RWPE1 (cell line): ENCODE measurements at regions of chr9 and their contacts with region 1.

Region 1: DNA sequence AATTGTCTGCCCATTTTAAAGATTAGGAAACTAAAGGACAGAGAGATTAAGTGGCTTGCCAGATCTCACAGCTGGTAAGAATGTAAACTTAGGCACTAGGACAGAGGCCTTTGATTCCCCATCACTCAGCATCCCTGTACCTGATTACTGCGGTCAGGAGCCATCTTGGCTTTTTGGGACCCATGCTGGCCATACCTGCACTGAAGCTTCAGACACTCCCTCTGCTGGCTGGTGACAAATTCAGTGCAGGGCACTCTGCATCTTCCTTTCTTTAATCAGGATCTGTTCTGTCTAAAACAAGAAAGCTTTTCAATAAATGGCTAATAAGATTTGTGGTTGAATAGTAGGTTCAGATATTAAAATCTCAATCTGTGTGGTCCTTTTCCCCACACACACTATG is 215.5 kb upstream of the RORB start:
- DNase-seq: no peak
- H3K27ac ChIP-seq: no peak overlapping the region
- CTCF ChIP-seq: no peak

Region 2: DNA sequence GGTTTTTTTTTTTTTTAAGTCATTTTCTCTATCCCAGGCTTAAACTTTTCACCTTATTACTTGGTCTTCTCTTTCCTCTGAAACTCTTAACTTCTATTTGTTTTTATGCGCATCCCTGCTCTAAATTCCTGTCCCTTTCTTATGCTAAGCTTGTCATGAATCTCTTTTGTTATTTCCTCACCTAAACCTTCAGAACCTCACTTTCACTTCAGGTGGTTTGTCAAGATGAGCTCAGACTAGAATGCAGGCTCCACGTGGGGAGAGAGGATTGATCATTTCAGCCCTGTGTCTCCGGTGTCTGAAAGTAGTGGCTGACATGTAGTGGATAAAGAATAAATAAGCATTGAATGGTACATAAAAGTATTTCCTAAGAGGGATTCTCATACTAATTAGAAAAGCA is 1066.4 kb before region 1 on chr9:
- CTCF ChIA-PET with region 1: interaction called, 10 read pairs
- POLR2A ChIA-PET with region 1: no interaction called
- DNase-seq: no peak
- H3K27ac ChIP-seq: no peak overlapping the region
- CTCF ChIP-seq: no peak